HepG2 (cell line): ENCODE measurements at regions of chr10 and their contacts with region 1.

Region 1: DNA sequence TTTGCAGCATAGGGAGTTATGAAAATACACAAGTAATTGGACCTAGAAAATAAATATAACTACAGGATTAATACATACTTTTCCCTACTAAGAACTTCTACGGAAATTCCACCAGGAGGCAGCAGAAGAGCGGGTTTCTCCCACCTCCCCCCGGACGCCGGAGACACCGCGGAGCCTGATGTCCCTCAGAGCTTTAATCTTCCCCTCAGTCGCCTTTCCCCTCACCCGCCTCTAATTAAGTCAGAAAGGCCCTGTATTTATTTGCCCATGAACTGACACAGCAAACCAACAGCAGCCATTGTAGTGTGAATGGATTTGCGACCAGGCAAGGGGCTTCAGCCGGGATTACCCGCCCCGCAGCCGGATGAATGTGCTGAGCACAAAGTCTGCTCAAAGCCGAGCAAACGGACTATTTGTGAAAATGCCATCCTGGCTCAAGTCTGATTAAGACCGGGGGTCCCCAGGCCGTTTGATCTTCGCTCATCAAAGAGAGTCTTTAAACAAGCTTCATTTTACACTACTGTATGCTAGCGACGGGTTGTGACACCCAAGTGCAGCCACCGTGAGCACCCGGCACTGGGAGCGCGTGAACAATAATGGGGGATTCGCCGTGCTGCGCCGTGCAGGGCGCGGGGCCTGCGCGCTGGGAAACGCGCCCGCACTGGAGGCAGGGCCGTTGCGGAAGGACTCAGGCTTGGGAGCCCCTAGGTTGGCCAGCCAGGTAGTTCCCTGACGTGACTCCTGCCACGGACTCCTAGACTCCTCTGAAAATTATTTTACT is 5.6 kb upstream of the DKK1 start:
- DNase-seq: peak; percentile 72
- ATAC-seq: peak; percentile 93
- H3K4me3 ChIP-seq: peak overlapping the region; percentile 56 to 70 (median 59)
- H3K27ac ChIP-seq: peak overlapping the region; percentile 50
- H3K4me1 ChIP-seq: peaks cover 31% of the 10 kb centered on the region
- H3K27me3 ChIP-seq: peaks cover 0 to 6% of the 10 kb centered on the region in 2 experiments; a peak in 2 of 5 replicates
- CTCF ChIP-seq: peak; percentile 87
- EP300 ChIP-seq: peak in 1 of 2 experiments; percentile 54; a peak in 1 of 4 replicates
- POLR2A ChIP-seq: 0 out of 4 replicates have a peak, but pooled peaks of 1 of the 2 experiments have one; percentile 21
- RAD21 ChIP-seq: peak; percentile 95

Region 2: DNA sequence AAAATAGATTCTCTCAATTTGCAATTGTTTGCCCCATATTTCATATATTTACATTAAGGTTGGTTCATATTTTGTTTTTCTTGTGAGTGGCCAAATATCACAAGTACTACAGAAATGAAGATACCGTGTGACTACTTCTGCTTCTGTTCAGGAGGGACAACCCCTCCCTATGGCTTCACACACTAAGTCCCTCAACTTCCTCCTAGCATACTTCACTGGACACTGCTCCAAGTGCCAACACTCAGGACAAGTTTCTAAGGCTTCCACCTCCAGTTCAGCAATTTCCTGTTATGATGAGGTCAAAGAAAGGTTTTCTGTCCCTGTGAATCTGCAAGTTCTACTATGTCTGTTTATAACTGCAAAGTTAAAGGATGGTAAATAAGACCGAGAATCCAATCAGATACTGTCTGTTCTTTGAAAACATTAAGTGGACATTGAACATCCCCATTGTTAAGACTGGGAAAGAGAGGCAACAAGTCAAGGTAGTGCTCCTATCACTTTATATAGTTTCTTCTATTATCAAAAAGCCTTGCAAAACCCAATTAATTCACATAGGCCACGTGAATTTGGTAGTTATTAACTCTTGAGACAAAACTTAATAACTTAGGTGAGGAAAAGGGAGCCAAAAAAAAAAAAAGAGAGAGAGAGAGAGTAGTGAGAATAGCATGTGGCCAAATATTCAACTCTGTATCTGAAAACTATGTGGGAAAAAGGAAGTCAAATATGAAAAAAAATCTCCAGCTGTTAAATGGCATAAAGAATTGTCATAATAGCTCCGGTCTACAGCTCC is 75.7 kb before region 1 on chr10:
- CTCF ChIA-PET with region 1: no interaction called
- POLR2A ChIA-PET with region 1: no interaction called
- in situ Hi-C with region 1: no loop called
- intact Hi-C with region 1: no loop called
- DNase-seq: peak; percentile 7
- ATAC-seq: peak; percentile 71
- H3K4me3 ChIP-seq: peak overlapping the region in 2 of 3 experiments; percentile 7 to 8; a peak in 2 of 6 replicates
- H3K27ac ChIP-seq: no peak overlapping the region
- H3K4me1 ChIP-seq: peaks cover 9% of the 10 kb centered on the region
- H3K27me3 ChIP-seq: no peaks in the 10 kb centered on the region
- CTCF ChIP-seq: no peak
- EP300 ChIP-seq: no peak
- POLR2A ChIP-seq: no peak
- RAD21 ChIP-seq: no peak

Region 3: DNA sequence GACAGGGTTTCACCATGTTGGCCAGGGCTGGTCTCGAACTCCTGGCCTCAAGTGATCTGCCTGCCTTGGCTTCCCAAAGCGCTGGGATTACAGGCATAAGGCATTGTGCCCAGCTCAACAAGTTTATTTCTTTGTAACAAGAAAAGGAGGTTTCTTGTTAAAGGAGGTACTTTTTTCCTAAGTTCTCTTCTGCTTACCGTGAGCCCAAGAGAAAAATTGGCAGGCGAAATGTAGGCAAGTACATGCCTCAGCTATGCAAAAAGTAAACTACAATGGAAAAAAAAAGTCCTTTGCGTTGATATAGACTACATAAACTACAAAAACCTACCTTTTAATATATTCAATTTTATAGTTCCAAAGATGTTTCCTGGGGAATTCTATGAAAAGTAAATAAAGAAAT is 128.2 kb after region 1 on chr10:
- CTCF ChIA-PET with region 1: no interaction called
- POLR2A ChIA-PET with region 1: no interaction called
- in situ Hi-C with region 1: no loop called
- intact Hi-C with region 1: loop called (anchors 2 kb)
- DNase-seq: no peak
- ATAC-seq: no peak
- H3K4me3 ChIP-seq: no peak overlapping the region
- H3K27ac ChIP-seq: no peak overlapping the region
- H3K4me1 ChIP-seq: no peaks in the 10 kb centered on the region
- H3K27me3 ChIP-seq: no peaks in the 10 kb centered on the region
- CTCF ChIP-seq: no peak
- EP300 ChIP-seq: no peak
- POLR2A ChIP-seq: no peak
- RAD21 ChIP-seq: no peak

Region 4: GRCh38 chr10:52488606-52489485 is 180.4 kb after region 1 on chr10:
- CTCF ChIA-PET with region 1: interaction called, 121 read pairs
- POLR2A ChIA-PET with region 1: interaction called, 18 read pairs
- in situ Hi-C with region 1: loop called (anchors 5 kb)
- intact Hi-C with region 1: loop called (anchors 1 kb)
- DNase-seq: peak; percentile 46
- ATAC-seq: peak; percentile 54; the same call in 1 of the 3 replicates
- H3K4me3 ChIP-seq: no peak overlapping the region
- H3K27ac ChIP-seq: no peak overlapping the region
- H3K4me1 ChIP-seq: no peaks in the 10 kb centered on the region
- H3K27me3 ChIP-seq: no peaks in the 10 kb centered on the region; a peak in 1 of 5 replicates
- CTCF ChIP-seq: peak; percentile 59
- EP300 ChIP-seq: no peak
- POLR2A ChIP-seq: no peak
- RAD21 ChIP-seq: peak; percentile 29; the same call in 1 of the 2 replicates

Region 5: GRCh38 chr10:52566471-52567246 is 258.2 kb after region 1 on chr10:
- CTCF ChIA-PET with region 1: interaction called, 29 read pairs
- POLR2A ChIA-PET with region 1: interaction called, 5 read pairs
- in situ Hi-C with region 1: loop called (anchors 10 kb)
- intact Hi-C with region 1: loop called (anchors 1 kb)
- DNase-seq: peak; percentile 16
- ATAC-seq: no peak
- H3K4me3 ChIP-seq: no peak overlapping the region
- H3K27ac ChIP-seq: no peak overlapping the region
- H3K4me1 ChIP-seq: no peaks in the 10 kb centered on the region
- H3K27me3 ChIP-seq: no peaks in the 10 kb centered on the region
- CTCF ChIP-seq: peak; percentile 35; the same call in 1 of the 2 replicates
- EP300 ChIP-seq: no peak
- POLR2A ChIP-seq: no peak
- RAD21 ChIP-seq: 0 out of 2 replicates have a peak, but pooled peaks have one; percentile 29

Region 6: DNA sequence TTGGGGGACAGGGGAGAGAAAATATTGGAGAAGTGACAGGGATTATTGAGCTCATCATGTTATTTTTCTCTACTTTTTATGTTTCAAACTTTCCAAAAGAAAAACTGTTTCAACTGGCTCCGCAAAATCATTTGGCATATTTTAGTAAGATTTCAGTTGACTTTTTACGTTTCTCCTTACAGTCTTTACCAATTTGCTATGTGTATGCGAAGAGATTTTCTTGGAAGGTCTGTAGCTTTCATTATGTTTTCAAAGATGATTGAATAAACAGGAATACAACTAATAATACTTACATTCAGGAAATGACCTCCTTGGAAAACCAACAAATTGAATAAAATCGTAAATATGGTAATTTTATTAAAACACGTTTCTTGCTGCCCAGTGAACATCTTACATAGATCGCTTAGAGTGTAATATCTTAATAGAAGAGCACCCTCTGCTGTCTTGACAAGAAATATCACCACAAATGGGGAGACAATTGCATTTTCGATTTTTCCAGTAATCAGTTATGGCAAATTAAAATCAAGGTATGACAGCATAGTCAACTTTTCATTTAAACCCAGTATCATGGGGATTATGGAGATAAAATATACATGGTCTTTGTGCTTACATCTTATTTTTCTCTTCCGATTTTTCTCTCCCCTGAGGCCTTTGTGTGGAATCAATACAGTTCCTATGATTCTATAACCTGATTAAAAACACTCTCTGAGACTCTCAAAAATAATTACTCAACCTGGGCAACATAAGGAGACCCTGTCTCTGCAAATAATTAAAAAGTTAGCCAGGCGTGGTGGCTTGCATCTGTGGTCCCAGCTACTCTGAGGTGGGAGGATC is 421.0 kb after region 1 on chr10:
- CTCF ChIA-PET with region 1: no interaction called
- POLR2A ChIA-PET with region 1: no interaction called
- in situ Hi-C with region 1: no loop called
- intact Hi-C with region 1: loop called (anchors 2 kb)
- DNase-seq: peak; percentile 12
- ATAC-seq: peak; percentile 54; the same call in 2 of the 3 replicates
- H3K4me3 ChIP-seq: no peak overlapping the region
- H3K27ac ChIP-seq: no peak overlapping the region
- H3K4me1 ChIP-seq: no peaks in the 10 kb centered on the region
- H3K27me3 ChIP-seq: no peaks in the 10 kb centered on the region
- CTCF ChIP-seq: peak; percentile 65
- EP300 ChIP-seq: no peak
- POLR2A ChIP-seq: no peak
- RAD21 ChIP-seq: no peak

Region 7: GRCh38 chr10:52779541-52780390 is 471.3 kb after region 1 on chr10:
- CTCF ChIA-PET with region 1: no interaction called
- POLR2A ChIA-PET with region 1: no interaction called
- in situ Hi-C with region 1: loop called (anchors 5 kb)
- intact Hi-C with region 1: loop called (anchors 1 kb)
- DNase-seq: peak; percentile 64
- ATAC-seq: peak; percentile 80
- H3K4me3 ChIP-seq: peak overlapping the region in 1 of 3 experiments; percentile 31; a peak in 1 of 6 replicates
- H3K27ac ChIP-seq: no peak overlapping the region
- H3K4me1 ChIP-seq: peaks cover 51% of the 10 kb centered on the region
- H3K27me3 ChIP-seq: no peaks in the 10 kb centered on the region
- CTCF ChIP-seq: peak; percentile 97
- EP300 ChIP-seq: no peak
- POLR2A ChIP-seq: no peak
- RAD21 ChIP-seq: peak; percentile 99